Activated CD4-positive, alpha-beta memory T cell treated with anti-CD3 and anti-CD28 coated beads for 36 hours (primary cell): ENCODE measurements at regions of chr5 and their contacts with region 1.

Region 1: GRCh38 chr5:33840927-33841547 is 50.8 kb downstream of the ADAMTS12 start:
- DNase-seq: peak; percentile 10
- H3K4me3 Mint-ChIP-seq: no peak overlapping the region
- H3K27ac Mint-ChIP-seq: no peak overlapping the region
- H3K4me1 Mint-ChIP-seq: peaks cover 16% of the 10 kb centered on the region
- H3K27me3 Mint-ChIP-seq: no peaks in the 10 kb centered on the region

Region 2: DNA sequence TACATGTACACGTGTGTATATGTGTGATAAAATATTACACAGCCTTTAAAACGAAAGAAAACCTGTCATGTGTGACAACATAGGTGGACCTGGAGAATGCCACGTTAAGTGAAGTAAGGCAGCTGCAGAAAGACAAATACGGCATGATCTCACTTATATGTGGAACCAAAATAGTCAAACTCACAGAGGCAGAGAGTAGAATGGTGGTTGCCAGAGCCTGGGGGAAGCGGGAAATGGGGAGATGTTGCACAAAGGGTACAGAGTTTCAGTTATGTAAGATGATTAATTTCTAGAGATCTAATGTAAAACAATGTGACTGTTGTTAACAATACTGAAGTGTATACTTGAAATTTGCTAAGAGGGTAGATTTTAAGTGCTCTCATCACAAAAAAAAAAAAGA is 16.0 kb after region 1 on chr5:
- CTCF ChIA-PET with region 1: no interaction called
- POLR2A ChIA-PET with region 1: no interaction called
- intact Hi-C with region 1: loop called (anchors 2 kb)
- DNase-seq: peak; percentile 27
- H3K4me3 Mint-ChIP-seq: no peak overlapping the region
- H3K27ac Mint-ChIP-seq: no peak overlapping the region
- H3K4me1 Mint-ChIP-seq: peaks cover 22% of the 10 kb centered on the region
- H3K27me3 Mint-ChIP-seq: peaks cover 3% of the 10 kb centered on the region